Cardiac septum (tissue), 1 donor: ENCODE measurements at regions of chr7 and their contacts with region 1.

Region 1: GRCh38 chr7:4610768-4611467 is 71.2 kb upstream of the FOXK1 start:
- DNase-seq: no peak

Region 2: DNA sequence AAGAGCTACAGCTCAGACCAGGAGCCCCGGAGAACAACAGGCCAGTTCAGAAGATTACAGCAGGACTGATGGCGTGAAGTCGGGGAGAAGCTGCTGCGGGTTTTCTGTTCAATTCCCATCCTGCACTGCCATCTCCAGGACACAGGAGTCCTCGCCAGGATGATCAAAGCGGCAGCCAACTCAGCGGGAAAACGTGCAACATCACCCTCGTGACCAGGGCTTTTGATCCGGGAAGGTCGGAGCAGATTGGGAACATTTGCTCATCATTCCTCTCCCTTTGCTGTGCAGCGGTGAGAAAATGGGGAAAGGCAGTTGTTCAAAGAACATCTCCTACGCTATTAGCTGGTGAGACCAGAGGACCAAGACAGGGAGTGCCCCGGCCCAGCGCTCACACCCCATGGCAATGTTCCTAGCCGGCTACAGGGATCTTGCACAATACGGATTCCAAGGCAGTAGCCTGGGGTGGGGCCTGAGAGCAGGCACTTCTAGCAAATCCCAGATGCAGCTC is 20.8 kb after region 1 on chr7:
- intact Hi-C with region 1: loop called (anchors 2 kb)
- DNase-seq: peak; percentile 81

Region 3: DNA sequence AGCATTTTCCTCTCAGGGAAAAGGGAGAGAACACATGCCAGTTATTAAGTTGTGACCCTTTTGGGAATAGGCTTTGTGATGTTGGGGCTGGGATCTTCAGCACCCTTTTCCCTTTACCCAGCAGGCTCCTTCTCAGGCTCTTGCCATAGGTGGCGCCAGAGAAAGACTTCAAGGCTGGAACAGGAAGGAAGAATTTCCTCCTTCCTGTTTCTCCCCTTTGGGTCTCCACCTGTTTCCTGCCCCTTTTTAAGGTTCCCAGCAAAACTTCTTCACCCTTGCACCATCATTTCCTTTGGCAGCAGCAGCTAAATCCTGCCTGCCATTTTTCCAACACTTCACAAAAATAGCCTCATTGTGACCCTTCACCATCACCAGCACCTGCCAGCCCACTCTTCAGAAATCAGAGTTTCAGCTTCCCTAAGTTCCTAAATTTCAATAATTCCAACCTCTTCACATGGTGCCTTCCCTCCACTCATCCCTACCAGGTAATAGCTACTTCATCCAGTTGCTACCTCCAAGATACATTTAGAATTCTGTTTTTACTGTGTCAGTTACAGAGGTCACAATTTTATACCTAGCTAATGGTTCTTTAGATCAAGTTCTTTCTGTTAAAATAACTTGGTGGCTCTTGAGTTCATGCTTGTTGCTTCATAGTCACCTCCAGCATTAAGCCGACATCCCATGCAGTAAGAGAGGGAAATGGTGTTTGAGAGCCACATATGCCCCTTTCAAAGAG is 48.8 kb after region 1 on chr7:
- intact Hi-C with region 1: no loop called
- DNase-seq: no peak

Region 4: GRCh38 chr7:4753711-4754432 is 143.0 kb after region 1 on chr7:
- intact Hi-C with region 1: loop called (anchors 1 kb)
- DNase-seq: peak; percentile 95